Activated CD4-positive, alpha-beta T cell treated with anti-CD3 and anti-CD28 coated beads for 36 hours (primary cell): ENCODE measurements at regions of chr19 and their contacts with region 1.

Region 1: DNA sequence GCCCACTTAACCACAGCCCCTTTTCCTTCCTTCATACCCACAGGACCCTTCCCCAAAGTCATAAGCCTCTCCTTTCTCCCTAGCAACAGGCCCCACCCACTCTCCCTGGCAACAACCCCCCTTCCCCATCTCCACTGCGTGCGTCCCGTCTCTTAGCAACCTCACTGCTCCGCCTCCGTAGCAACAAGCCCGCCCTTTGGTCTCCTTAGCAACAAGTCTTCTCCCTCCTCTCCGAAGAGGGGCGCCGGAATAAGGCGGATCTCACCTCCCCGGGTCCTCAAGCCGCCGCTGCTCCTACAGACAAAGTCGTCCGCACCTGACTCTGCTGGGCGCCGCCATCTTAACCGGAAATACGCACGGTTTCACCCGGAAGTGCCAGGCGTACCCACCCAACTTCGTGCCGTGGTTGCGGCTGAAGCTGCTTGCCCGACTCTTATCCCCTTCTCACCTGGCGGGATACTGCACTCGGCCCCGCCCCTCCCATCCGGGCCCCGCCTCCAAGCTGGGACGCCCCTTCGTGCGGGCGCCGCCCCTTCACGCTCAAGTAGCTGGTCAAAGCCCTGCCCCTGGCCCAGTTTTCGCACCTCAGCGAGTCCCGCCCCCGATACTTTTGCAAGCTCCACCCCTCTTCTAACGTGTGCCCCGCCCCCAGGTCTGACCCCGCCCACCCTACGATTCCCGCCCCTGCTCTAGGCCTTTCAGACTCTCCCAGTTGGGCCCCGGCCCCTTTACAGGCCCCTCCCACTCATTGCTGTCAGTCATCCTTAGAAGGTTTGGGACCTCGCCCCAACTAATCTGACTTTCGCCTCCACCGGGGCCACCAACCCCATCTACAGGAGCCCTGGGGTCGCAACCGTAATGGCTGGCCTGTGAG is at the start of gene HSPBP1:
- DNase-seq: peak; percentile 98
- ATAC-seq: peak; percentile 92
- H3K4me3 Mint-ChIP-seq: peak within 1 kb of the TSS; percentile 100
- H3K27ac Mint-ChIP-seq: peak within 1 kb of the TSS; percentile 98
- H3K4me1 Mint-ChIP-seq: peaks cover 24% of the 10 kb centered on the region
- H3K27me3 Mint-ChIP-seq: no peaks in the 10 kb centered on the region
- total RNA-seq, gene HSPBP1: 41.1 to 45.2 TPM

Region 2: GRCh38 chr19:55080968-55081772 is 198.8 kb before region 1 on chr19:
- CTCF ChIA-PET with region 1: no interaction called
- POLR2A ChIA-PET with region 1: no interaction called
- intact Hi-C with region 1: loop called in 1 of 2 experiments (anchors 1 kb)
- DNase-seq: peak; percentile 95
- ATAC-seq: peak; percentile 71
- H3K4me3 Mint-ChIP-seq: peak overlapping the region; percentile 69
- H3K27ac Mint-ChIP-seq: peak overlapping the region; percentile 31
- H3K4me1 Mint-ChIP-seq: peaks cover 22% of the 10 kb centered on the region
- H3K27me3 Mint-ChIP-seq: peaks cover 56% of the 10 kb centered on the region

Region 3: GRCh38 chr19:55178781-55179599 is 101.0 kb before region 1 on chr19:
- CTCF ChIA-PET with region 1: no interaction called
- POLR2A ChIA-PET with region 1: no interaction called
- intact Hi-C with region 1: loop called in 1 of 2 experiments (anchors 1 kb)
- DNase-seq: peak; percentile 95
- ATAC-seq: peak; percentile 81
- H3K4me3 Mint-ChIP-seq: peak overlapping the region; percentile 61
- H3K27ac Mint-ChIP-seq: no peak overlapping the region
- H3K4me1 Mint-ChIP-seq: peaks cover 20% of the 10 kb centered on the region
- H3K27me3 Mint-ChIP-seq: peaks cover 49% of the 10 kb centered on the region

Region 4: DNA sequence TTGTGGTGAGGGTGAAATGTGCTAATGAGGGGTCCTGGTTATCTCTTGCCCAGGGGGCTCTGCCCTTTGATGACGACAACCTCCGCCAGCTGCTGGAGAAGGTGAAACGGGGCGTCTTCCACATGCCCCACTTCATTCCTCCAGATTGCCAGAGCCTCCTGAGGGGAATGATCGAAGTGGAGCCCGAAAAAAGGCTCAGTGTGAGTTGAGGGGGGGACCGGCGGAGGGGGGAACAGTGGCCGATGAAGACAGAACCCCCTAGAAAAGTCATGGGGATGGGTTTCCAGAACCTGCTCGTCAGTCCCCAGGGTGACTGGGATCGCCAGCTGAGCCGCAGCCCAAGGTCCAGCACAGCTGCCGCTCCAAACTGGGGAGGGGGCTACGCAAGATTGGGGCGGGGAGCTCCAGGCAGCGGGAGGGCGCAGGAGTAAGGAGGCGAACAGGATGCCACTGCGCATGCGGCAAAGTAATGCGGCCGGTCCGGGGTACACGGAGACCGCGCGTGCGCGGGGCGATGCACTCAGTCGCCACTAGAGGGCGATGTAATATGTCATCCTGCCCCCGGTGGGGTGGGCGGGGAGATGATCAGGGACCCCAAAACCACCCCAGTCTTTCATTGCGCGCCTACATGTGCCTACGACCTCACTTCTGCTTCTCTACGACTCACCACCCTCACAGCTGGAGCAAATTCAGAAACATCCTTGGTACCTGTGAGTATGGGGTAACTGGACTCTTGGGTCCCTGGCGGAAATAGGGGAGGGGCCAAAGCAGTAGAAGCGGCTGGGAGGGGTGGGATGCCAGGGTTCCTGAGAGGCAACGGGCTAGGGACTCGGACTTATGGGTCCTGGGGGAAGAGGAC is 21.7 kb after region 1 on chr19:
- CTCF ChIA-PET with region 1: interaction called, 4 read pairs
- POLR2A ChIA-PET with region 1: no interaction called
- intact Hi-C with region 1: loop called in 1 of 2 experiments (anchors 1 kb)
- DNase-seq: peak; percentile 97
- ATAC-seq: peak; percentile 90
- H3K4me3 Mint-ChIP-seq: peak overlapping the region; percentile 81
- H3K27ac Mint-ChIP-seq: peak overlapping the region; percentile 90
- H3K4me1 Mint-ChIP-seq: peaks cover 6% of the 10 kb centered on the region
- H3K27me3 Mint-ChIP-seq: no peaks in the 10 kb centered on the region

Region 5: DNA sequence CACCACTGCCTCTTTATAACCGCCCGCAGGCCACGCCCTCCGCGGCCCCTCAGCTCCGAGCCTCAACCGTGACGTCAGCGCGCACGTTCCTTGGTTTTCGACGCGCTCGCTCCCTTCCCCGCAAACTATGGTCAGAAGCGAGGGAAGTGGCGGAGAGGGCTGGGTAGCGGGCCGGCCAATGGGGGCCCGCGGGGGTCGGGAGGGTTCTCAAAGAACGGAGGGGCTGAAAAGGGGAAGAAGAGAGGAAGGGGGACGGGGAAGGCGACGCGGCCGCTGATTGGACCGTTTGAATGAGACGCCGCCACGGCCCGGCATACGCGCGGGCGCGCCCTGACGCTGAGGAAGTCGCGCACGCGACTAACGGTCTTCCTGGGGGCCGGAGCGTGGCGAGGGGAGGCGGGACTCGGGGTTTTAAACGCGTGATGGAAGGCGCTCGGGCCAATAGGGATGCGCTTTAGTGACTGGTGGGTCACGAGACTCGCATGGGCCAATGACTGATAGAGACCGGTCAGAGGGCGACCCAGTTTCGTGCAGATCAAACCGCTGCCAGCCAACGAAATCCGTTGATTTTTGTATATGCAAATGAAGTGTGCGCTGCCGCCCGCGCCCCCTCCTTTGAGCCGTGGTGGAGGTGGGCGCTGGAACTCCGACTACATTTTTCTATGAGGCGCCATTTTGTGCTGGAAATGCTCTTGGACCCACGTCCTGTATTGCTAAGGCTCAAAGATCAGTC is 128.0 kb after region 1 on chr19:
- CTCF ChIA-PET with region 1: no interaction called
- POLR2A ChIA-PET with region 1: interaction called, 5 read pairs
- intact Hi-C with region 1: loop called (anchors 1 kb)
- DNase-seq: peak; percentile 98
- ATAC-seq: peak; percentile 96
- H3K4me3 Mint-ChIP-seq: peak overlapping the region; percentile 90
- H3K27ac Mint-ChIP-seq: peak overlapping the region; percentile 96
- H3K4me1 Mint-ChIP-seq: peaks cover 22% of the 10 kb centered on the region
- H3K27me3 Mint-ChIP-seq: no peaks in the 10 kb centered on the region